GM12878 (cell line): ENCODE measurements at regions of chr5 and their contacts with region 1.

Region 1: GRCh38 chr5:59819806-59820205 is 73.7 kb downstream of the PDE4D start:
- DNase-seq: no peak
- ATAC-seq: no peak
- H3K4me3 ChIP-seq: no peak overlapping the region
- H3K27ac ChIP-seq: no peak overlapping the region
- H3K4me1 ChIP-seq: no peaks in the 10 kb centered on the region
- H3K27me3 ChIP-seq: no peaks in the 10 kb centered on the region
- CTCF ChIP-seq: no peak
- EP300 ChIP-seq: no peak
- POLR2A ChIP-seq: no peak
- RAD21 ChIP-seq: no peak

Region 2: GRCh38 chr5:59988396-59988795 is 168.6 kb after region 1 on chr5:
- CTCF ChIA-PET with region 1: no interaction called
- POLR2A ChIA-PET with region 1: no interaction called
- RAD21 ChIA-PET with region 1: no interaction called
- SMC1A ChIA-PET with region 1: no interaction called
- in situ Hi-C with region 1: no loop called
- intact Hi-C with region 1: no loop called
- DNase-seq: no peak
- ATAC-seq: no peak
- H3K4me3 ChIP-seq: no peak overlapping the region
- H3K27ac ChIP-seq: no peak overlapping the region
- H3K4me1 ChIP-seq: no peaks in the 10 kb centered on the region
- H3K27me3 ChIP-seq: no peaks in the 10 kb centered on the region; a peak in 1 of 4 replicates
- CTCF ChIP-seq: no peak
- EP300 ChIP-seq: no peak
- POLR2A ChIP-seq: no peak
- RAD21 ChIP-seq: no peak

Region 3: GRCh38 chr5:60161340-60161934 is 341.6 kb after region 1 on chr5:
- CTCF ChIA-PET with region 1: interaction called, 7 read pairs
- POLR2A ChIA-PET with region 1: no interaction called
- RAD21 ChIA-PET with region 1: no interaction called
- SMC1A ChIA-PET with region 1: interaction called, 3 read pairs
- in situ Hi-C with region 1: loop called (anchors 5 kb)
- intact Hi-C with region 1: no loop called
- DNase-seq: peak; percentile 4
- ATAC-seq: peak; percentile 73
- H3K4me3 ChIP-seq: no peak overlapping the region
- H3K27ac ChIP-seq: no peak overlapping the region
- H3K4me1 ChIP-seq: no peaks in the 10 kb centered on the region
- H3K27me3 ChIP-seq: no peaks in the 10 kb centered on the region
- CTCF ChIP-seq: peak; percentile 51 to 61 (median 57); a peak in 5 of 6 replicates
- EP300 ChIP-seq: no peak
- POLR2A ChIP-seq: no peak
- RAD21 ChIP-seq: peak; percentile 68